ENCODE measurements at regions of chr1 and their contacts with region 1.

Region 1: GRCh38 chr1:153532769-153533599 is 2.8 kb downstream of the S100A6 start:
- DNase-seq: peak; percentile 96
- H3K4me3 ChIP-seq: peak overlapping the region; percentile 70 to 91 (median 85)
- H3K27ac ChIP-seq: peak overlapping the region; percentile 96 to 99 (median 97)
- H3K4me1 ChIP-seq: peaks cover 34 to 49% (median 47%) of the 10 kb centered on the region in 4 donors
- H3K27me3 ChIP-seq: no peaks in the 10 kb centered on the region
- CTCF ChIP-seq: peak; percentile 93 to 97 (median 95)
- EP300 ChIP-seq: no peak
- POLR2A ChIP-seq: no peak

Region 2: DNA sequence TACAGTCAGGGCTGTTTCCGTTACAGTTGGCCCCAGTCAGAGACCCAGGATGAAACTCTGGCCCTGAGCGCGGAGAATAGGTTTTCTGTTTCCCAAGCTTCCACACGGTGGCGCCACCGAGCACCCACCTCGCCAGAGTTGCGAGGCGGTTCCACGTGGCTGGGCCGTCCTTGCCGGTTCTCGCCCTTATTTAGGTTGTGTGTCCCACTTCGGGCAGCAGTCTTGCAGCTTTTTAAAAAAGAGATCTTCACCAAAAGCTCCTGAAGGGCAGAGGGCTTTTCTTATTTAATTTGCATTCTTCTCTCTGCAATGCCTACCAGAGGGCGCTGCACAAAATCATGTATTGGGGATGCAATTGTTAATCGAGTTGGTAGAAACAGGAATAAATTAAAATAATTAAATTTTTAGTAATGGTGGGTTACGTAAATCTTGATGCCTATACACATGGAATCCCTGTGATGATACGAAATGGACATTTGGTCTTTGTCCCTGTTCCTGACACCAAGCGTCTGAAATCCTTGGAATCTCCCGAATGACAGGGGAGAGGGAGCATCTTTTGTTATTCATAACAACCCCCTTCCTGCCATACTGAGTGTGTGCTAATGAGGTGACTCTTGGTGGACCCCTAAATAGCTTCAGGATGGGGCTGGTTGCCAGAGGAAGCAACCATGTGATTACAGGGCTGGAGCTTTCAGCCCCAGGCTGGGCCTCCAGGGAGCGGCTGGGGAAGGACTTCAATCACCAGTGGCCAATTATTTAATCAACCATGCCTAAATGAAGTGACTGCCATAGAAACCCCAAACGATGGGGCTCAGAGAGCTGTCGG is 67.0 kb before region 1 on chr1:
- intact Hi-C with region 1: no loop called
- DNase-seq: no peak
- H3K4me3 ChIP-seq: no peak overlapping the region
- H3K27ac ChIP-seq: no peak overlapping the region
- H3K4me1 ChIP-seq: peaks cover 4 to 17% (median 12%) of the 10 kb centered on the region in 4 donors
- H3K27me3 ChIP-seq: peaks cover 0 to 11% (median 0%) of the 10 kb centered on the region in 4 donors
- CTCF ChIP-seq: peak; percentile 77 to 83 (median 78)
- EP300 ChIP-seq: no peak
- POLR2A ChIP-seq: no peak

Region 3: GRCh38 chr1:153617675-153618074 is 84.7 kb after region 1 on chr1:
- intact Hi-C with region 1: loop called (anchors 5 kb)
- DNase-seq: no peak
- H3K4me3 ChIP-seq: no peak overlapping the region
- H3K27ac ChIP-seq: peak overlapping the region in 2 of 4 donors; percentile 9 to 46
- H3K4me1 ChIP-seq: peaks cover 20 to 31% (median 28%) of the 10 kb centered on the region in 4 donors
- H3K27me3 ChIP-seq: no peaks in the 10 kb centered on the region
- CTCF ChIP-seq: peak; percentile 33 to 54 (median 52)
- EP300 ChIP-seq: no peak
- POLR2A ChIP-seq: no peak

Measured in esophagus muscularis mucosa (tissue), 4 donors.